ENCODE measurements at regions of chr9 and their contacts with region 1.

Region 1: GRCh38 chr9:137129456-137130175 is 9.3 kb upstream of the GRIN1 start:
- DNase-seq: peak; percentile 89 to 92 (median 91)
- H3K4me3 ChIP-seq: peak overlapping the region in 1 of 2 donors; percentile 84
- H3K4me3 Mint-ChIP-seq: peak overlapping the region; percentile 86 to 97 (median 90)
- H3K27ac ChIP-seq: peak overlapping the region; percentile 80
- H3K27ac Mint-ChIP-seq: peak overlapping the region; percentile 82 to 99 (median 92)
- H3K4me1 ChIP-seq: peaks cover 31% of the 10 kb centered on the region
- H3K4me1 Mint-ChIP-seq: peaks cover 23 to 35% (median 30%) of the 10 kb centered on the region in 4 donors
- H3K27me3 ChIP-seq: no peaks in the 10 kb centered on the region
- H3K27me3 Mint-ChIP-seq: peaks cover 2 to 4% of the 10 kb centered on the region in 2 donors

Region 2: GRCh38 chr9:136467766-136468563 is 661.7 kb before region 1 on chr9:
- CTCF ChIA-PET with region 1: no interaction called
- POLR2A ChIA-PET with region 1: no interaction called
- intact Hi-C with region 1: no loop called
- DNase-seq: no peak
- H3K4me3 ChIP-seq: no peak overlapping the region
- H3K4me3 Mint-ChIP-seq: no peak overlapping the region
- H3K27ac ChIP-seq: no peak overlapping the region
- H3K27ac Mint-ChIP-seq: no peak overlapping the region
- H3K4me1 ChIP-seq: no peaks in the 10 kb centered on the region
- H3K4me1 Mint-ChIP-seq: no peaks in the 10 kb centered on the region
- H3K27me3 ChIP-seq: no peaks in the 10 kb centered on the region
- H3K27me3 Mint-ChIP-seq: no peaks in the 10 kb centered on the region

Region 3: GRCh38 chr9:136949817-136950655 is 179.6 kb before region 1 on chr9:
- CTCF ChIA-PET with region 1: no interaction called
- POLR2A ChIA-PET with region 1: no interaction called
- intact Hi-C with region 1: no loop called
- DNase-seq: peak; percentile 93 to 97 (median 95)
- H3K4me3 ChIP-seq: peak overlapping the region; percentile 29 to 57
- H3K4me3 Mint-ChIP-seq: peak overlapping the region; percentile 79 to 90 (median 86)
- H3K27ac ChIP-seq: peak overlapping the region; percentile 82
- H3K27ac Mint-ChIP-seq: peak overlapping the region; percentile 72 to 91 (median 89)
- H3K4me1 ChIP-seq: peaks cover 16% of the 10 kb centered on the region
- H3K4me1 Mint-ChIP-seq: peaks cover 3 to 16% (median 8%) of the 10 kb centered on the region in 4 donors
- H3K27me3 ChIP-seq: no peaks in the 10 kb centered on the region
- H3K27me3 Mint-ChIP-seq: no peaks in the 10 kb centered on the region

Region 4: DNA sequence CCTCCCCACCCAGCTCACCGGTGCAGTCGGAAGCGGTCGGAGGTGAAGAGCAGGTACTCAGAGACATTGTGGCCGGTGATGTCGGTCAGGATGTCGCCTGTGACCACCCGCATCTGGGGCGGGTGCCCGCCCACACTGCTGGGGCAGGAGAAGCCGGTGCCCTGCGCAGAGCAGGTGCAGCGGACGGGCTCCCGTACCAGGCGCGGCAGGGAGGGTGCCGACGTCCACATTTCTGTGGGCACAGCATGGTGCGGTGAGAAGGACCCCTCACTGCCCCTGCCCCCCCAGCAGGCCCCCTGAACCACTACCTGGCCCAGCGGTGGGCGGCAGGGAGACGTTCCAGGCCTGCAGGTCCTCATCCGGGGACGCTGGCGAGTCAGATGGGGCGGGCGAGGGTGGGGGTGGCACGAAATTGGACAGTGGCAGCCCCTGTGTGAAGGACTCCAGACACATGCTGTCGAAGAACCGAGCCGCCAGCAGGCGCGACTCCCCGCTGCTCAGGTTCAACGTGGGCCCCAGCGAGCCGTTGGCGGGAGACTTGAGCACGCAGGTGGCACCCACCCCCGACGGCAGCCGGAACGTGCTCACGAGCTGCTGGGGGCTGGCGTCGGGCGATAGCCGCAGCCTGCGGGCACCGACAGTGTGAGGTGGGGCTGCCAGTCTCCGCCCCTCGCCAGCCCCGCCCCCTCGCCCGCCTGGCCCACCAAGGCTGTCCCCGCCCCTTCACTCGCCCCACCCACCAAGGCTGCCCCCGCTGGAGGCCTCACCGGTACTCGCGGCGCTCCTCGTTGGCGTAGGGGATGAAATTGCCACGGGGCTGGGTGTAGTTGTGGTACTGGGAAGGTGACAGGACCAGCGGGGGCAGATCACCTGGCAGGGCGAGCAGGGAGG is 116.7 kb before region 1 on chr9:
- CTCF ChIA-PET with region 1: no interaction called
- POLR2A ChIA-PET with region 1: no interaction called
- intact Hi-C with region 1: no loop called
- DNase-seq: no peak
- H3K4me3 ChIP-seq: no peak overlapping the region
- H3K4me3 Mint-ChIP-seq: no peak overlapping the region
- H3K27ac ChIP-seq: no peak overlapping the region
- H3K27ac Mint-ChIP-seq: no peak overlapping the region
- H3K4me1 ChIP-seq: no peaks in the 10 kb centered on the region
- H3K4me1 Mint-ChIP-seq: no peaks in the 10 kb centered on the region
- H3K27me3 ChIP-seq: no peaks in the 10 kb centered on the region
- H3K27me3 Mint-ChIP-seq: no peaks in the 10 kb centered on the region

Region 5: GRCh38 chr9:137103206-137103999 is 26.2 kb before region 1 on chr9:
- CTCF ChIA-PET with region 1: no interaction called
- POLR2A ChIA-PET with region 1: no interaction called
- intact Hi-C with region 1: no loop called
- DNase-seq: no peak
- H3K4me3 ChIP-seq: no peak overlapping the region
- H3K4me3 Mint-ChIP-seq: no peak overlapping the region
- H3K27ac ChIP-seq: no peak overlapping the region
- H3K27ac Mint-ChIP-seq: no peak overlapping the region
- H3K4me1 ChIP-seq: no peaks in the 10 kb centered on the region
- H3K4me1 Mint-ChIP-seq: peaks cover 0 to 4% (median 0%) of the 10 kb centered on the region in 4 donors
- H3K27me3 ChIP-seq: no peaks in the 10 kb centered on the region
- H3K27me3 Mint-ChIP-seq: no peaks in the 10 kb centered on the region

Region 6: DNA sequence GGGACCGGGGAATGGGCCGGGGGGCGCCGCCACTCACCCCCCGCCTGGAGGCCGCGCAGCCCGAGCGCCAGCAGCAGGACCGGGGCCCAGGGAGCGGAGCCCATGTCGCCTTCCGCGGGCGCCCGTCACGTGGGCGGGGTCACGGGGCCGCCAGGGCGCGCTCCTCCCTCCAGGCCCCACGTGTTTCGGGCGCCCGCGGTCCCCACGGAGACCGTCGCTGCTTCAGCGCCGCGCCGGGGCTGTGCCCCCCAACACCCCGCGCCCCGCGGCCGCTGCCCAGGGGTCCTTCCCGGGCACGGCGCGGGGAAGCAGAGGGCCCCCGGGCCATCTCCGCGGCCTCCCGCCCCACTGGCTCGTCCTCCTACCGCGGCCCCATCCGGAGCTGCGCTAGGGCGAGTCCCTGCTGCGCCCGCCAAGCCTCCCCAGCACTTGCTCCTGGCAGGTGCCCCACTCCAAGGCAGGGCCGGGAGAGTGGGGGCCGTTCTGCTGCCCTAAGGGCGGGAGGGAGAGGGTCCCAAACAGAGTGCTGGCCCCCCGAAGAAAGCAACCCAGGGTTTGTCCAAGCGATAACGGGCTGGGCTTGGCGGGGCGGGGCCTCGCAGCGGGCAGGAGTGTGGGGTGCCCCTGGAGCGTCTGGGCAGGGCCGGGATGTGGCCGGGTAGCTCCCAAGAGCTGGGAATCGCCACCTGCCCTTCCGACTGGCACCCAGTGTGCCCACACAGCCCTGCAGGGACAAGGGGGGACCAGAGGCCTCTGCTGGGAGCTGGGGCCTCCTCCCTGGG is 14.8 kb before region 1 on chr9 and contains the start of gene DPP7:
- CTCF ChIA-PET with region 1: no interaction called
- POLR2A ChIA-PET with region 1: interaction called, 21 read pairs
- intact Hi-C with region 1: no loop called
- DNase-seq: peak; percentile 79 to 83 (median 80)
- H3K4me3 ChIP-seq: peak within 1 kb of the TSS in 1 of 2 donors; percentile 43
- H3K4me3 Mint-ChIP-seq: peak within 1 kb of the TSS; percentile 39 to 78 (median 66)
- H3K27ac ChIP-seq: peak within 1 kb of the TSS; percentile 58
- H3K27ac Mint-ChIP-seq: peak within 1 kb of the TSS in 4 of 7 donors; percentile 30 to 50 (median 42)
- H3K4me1 ChIP-seq: peaks cover 16% of the 10 kb centered on the region
- H3K4me1 Mint-ChIP-seq: peaks cover 0 to 17% (median 2%) of the 10 kb centered on the region in 4 donors
- H3K27me3 ChIP-seq: no peaks in the 10 kb centered on the region
- H3K27me3 Mint-ChIP-seq: no peaks in the 10 kb centered on the region
- total RNA-seq, gene DPP7: 357 to 362 TPM

Region 7: DNA sequence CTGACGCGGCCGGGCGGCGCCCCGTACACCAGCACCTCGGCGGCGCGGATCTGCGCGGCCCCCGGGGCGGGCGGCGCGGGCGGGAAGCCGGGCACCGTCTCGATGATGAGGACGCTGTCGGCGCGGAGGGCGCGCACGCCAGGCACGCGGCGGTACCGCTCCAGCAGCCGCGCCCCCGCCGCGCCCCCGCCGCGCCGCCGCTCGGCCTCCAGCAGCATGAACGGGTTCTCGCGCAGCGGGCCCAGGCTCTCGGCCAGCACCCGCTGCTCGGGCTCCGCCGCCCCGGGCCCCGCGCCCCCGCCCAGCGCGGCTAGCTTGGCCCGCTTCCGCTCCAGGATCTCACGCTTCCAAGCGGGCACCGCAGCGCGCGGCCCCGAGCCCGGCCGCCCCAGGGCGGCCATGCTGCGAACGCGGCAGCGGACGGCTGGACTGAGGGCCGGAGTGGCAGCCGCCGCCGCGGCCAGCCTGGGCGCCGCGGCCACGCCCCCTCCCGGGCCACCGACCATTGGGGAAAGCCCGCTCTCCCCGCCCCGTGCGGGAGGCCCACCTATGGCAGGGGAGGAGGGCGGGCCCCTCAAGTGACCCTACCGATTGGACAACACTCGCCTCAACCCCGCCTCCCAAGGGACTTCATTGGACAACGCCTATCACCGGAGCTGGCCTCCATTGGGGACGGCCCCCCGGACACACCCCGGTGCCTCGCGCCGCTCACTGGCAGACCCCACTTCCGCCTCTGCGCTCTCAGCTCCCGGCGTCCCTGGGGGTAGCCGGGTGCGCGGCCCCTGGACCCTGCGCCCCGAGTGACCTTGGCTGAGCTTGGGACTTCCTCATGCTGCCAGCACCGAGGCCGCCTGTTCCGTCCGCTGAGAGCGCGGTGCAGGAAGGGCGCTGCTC is 70.9 kb after region 1 on chr9 and contains the start of gene TPRN:
- CTCF ChIA-PET with region 1: interaction called, 4 read pairs
- POLR2A ChIA-PET with region 1: interaction called, 19 read pairs
- intact Hi-C with region 1: loop called (anchors 2 kb)
- DNase-seq: peak; percentile 97 to 99 (median 98)
- H3K4me3 ChIP-seq: peak within 1 kb of the TSS; percentile 52 to 77
- H3K4me3 Mint-ChIP-seq: peak within 1 kb of the TSS; percentile 81 to 93 (median 82)
- H3K27ac ChIP-seq: peak within 1 kb of the TSS; percentile 72
- H3K27ac Mint-ChIP-seq: peak within 1 kb of the TSS; percentile 62 to 93 (median 83)
- H3K4me1 ChIP-seq: peaks cover 40% of the 10 kb centered on the region
- H3K4me1 Mint-ChIP-seq: peaks cover 9 to 35% (median 25%) of the 10 kb centered on the region in 4 donors
- H3K27me3 ChIP-seq: no peaks in the 10 kb centered on the region
- H3K27me3 Mint-ChIP-seq: no peaks in the 10 kb centered on the region
- total RNA-seq, gene TPRN: 8.5 to 8.6 TPM